B cell (primary cell): ENCODE measurements at regions of chr9 and their contacts with region 1.

Region 1: DNA sequence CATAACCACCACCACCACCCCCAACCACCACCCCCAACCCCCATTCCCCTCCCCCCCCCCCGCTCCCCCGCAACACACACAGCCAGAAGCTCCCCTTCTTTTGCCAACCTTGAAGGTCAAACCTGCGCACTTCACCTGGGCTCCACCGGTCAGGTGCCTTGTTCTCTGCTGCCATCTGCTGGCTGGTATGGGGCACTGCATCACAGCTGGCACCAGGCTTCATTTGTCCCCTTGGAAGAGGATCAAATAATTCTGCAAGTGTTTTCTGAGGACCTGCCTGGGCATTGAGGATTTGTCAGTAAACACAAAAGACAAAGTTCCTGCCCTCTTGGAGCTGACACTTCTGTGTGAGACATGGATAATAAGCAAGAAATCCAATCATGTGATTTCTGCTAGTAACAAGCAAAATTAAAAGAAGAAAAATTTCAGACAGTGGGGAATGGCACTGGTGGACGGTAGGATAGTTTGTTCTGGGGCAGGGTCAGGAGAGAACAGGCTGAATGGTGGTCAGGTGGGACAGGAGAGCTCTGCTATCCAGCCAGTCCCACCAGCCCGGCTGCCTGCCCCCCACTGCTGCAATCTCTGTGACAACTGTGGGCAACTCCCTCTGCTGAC is 55.6 kb upstream of the LMX1B start:
- DNase-seq: peak; percentile 78
- ATAC-seq: peak; percentile 97
- H3K4me3 ChIP-seq: no peak overlapping the region
- H3K4me3 Mint-ChIP-seq: no peak overlapping the region
- H3K27ac ChIP-seq: no peak overlapping the region
- H3K27ac Mint-ChIP-seq: no peak overlapping the region
- H3K4me1 ChIP-seq: no peaks in the 10 kb centered on the region
- H3K4me1 Mint-ChIP-seq: no peaks in the 10 kb centered on the region
- H3K27me3 ChIP-seq: peaks cover 0 to 23% (median 10%) of the 10 kb centered on the region in 4 experiments
- H3K27me3 Mint-ChIP-seq: peaks cover 26% of the 10 kb centered on the region
- CTCF ChIP-seq: peak; percentile 87

Region 2: DNA sequence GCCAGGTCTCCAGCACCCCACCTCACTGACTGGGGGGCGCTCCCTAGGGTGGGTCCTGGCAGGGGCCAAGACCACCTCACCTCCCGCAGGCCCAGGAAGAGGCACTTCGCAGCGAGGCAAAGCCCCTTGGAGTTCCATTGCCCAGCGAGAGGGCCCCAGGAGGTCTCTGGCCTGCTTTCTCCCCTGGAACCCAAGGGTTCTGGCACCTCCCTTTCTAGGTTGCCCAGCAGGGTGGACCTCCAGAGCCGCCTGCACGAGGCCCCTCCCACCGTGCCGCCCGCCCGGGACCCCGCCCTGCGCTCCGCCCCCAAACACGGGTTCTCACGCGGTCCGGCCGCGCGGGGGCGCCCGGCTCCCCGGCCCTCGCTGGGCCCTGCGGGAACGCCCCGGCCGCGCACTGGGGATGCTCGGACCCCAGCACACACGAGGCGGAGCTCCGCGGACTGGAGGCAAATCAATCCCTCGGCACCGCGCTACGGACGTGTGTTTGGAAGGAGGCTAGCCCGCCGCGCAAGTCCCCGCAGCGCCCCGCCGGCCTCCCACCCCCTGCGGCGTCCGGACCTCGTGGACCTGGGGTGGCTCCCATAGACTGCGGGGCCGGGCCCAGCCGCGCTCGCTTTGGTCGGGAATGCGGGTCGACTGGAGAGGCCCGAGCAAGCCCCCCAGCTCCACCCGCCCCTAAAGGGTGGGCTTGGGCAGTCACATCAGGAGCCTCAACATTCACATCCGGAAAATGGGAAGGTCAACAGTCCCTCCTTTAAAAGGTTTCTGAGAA is 43.9 kb before region 1 on chr9:
- CTCF ChIA-PET with region 1: interaction called, 167 read pairs
- POLR2A ChIA-PET with region 1: interaction called, 5 read pairs
- intact Hi-C with region 1: loop called (anchors 1 kb)
- DNase-seq: peak; percentile 78
- ATAC-seq: peak; percentile 97
- H3K4me3 ChIP-seq: peak overlapping the region in 3 of 5 experiments; percentile 17 to 38 (median 29)
- H3K4me3 Mint-ChIP-seq: peak overlapping the region; percentile 50
- H3K27ac ChIP-seq: no peak overlapping the region
- H3K27ac Mint-ChIP-seq: peak overlapping the region; percentile 32
- H3K4me1 ChIP-seq: peaks cover 24 to 27% of the 10 kb centered on the region in 2 donors
- H3K4me1 Mint-ChIP-seq: peaks cover 26% of the 10 kb centered on the region
- H3K27me3 ChIP-seq: peaks cover 2 to 53% (median 25%) of the 10 kb centered on the region in 4 experiments
- H3K27me3 Mint-ChIP-seq: peaks cover 44% of the 10 kb centered on the region
- CTCF ChIP-seq: peak; percentile 76

Region 3: GRCh38 chr9:126523611-126524111 is 34.5 kb before region 1 on chr9:
- CTCF ChIA-PET with region 1: interaction called, 167 read pairs
- POLR2A ChIA-PET with region 1: no interaction called
- intact Hi-C with region 1: no loop called
- DNase-seq: peak; percentile 41
- ATAC-seq: peak; percentile 61
- H3K4me3 ChIP-seq: peak overlapping the region in 3 of 5 experiments; percentile 21 to 61 (median 48)
- H3K4me3 Mint-ChIP-seq: peak overlapping the region; percentile 88
- H3K27ac ChIP-seq: no peak overlapping the region
- H3K27ac Mint-ChIP-seq: peak overlapping the region; percentile 77
- H3K4me1 ChIP-seq: peaks cover 11 to 16% of the 10 kb centered on the region in 2 donors
- H3K4me1 Mint-ChIP-seq: peaks cover 20% of the 10 kb centered on the region
- H3K27me3 ChIP-seq: peaks cover 0 to 22% (median 7%) of the 10 kb centered on the region in 4 experiments
- H3K27me3 Mint-ChIP-seq: peaks cover 22% of the 10 kb centered on the region
- CTCF ChIP-seq: no peak

Region 4: DNA sequence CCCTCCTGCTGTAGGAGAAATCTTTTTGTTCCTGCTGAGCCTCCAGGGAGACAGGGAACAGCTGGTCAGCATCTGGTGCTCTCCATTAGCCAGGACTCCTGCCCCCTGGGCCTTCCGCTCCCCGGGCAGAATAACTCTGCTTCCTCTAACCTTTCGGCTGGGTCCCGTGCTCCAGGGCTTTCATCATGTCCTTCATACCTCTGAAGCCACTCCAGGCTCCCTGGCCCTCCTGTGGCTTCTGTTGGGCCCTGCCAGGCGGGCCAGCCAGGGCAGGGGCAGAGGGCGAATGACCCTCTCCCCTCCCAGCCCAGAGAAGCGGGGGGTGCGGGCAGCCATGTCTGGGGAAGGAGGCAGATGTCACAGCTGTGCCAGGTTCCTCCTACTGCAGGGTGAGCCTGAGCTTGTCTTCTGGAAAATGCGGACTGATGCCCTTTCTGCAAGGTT is 26.1 kb before region 1 on chr9:
- CTCF ChIA-PET with region 1: interaction called, 28 read pairs
- POLR2A ChIA-PET with region 1: interaction called, 3 read pairs
- intact Hi-C with region 1: no loop called
- DNase-seq: no peak
- ATAC-seq: no peak
- H3K4me3 ChIP-seq: no peak overlapping the region
- H3K4me3 Mint-ChIP-seq: peak overlapping the region; percentile 79
- H3K27ac ChIP-seq: peak overlapping the region in 1 of 2 donors; percentile 18
- H3K27ac Mint-ChIP-seq: peak overlapping the region; percentile 91
- H3K4me1 ChIP-seq: peaks cover 43 to 58% of the 10 kb centered on the region in 2 donors
- H3K4me1 Mint-ChIP-seq: peaks cover 48% of the 10 kb centered on the region
- H3K27me3 ChIP-seq: no peaks in the 10 kb centered on the region
- H3K27me3 Mint-ChIP-seq: no peaks in the 10 kb centered on the region
- CTCF ChIP-seq: no peak

Region 5: DNA sequence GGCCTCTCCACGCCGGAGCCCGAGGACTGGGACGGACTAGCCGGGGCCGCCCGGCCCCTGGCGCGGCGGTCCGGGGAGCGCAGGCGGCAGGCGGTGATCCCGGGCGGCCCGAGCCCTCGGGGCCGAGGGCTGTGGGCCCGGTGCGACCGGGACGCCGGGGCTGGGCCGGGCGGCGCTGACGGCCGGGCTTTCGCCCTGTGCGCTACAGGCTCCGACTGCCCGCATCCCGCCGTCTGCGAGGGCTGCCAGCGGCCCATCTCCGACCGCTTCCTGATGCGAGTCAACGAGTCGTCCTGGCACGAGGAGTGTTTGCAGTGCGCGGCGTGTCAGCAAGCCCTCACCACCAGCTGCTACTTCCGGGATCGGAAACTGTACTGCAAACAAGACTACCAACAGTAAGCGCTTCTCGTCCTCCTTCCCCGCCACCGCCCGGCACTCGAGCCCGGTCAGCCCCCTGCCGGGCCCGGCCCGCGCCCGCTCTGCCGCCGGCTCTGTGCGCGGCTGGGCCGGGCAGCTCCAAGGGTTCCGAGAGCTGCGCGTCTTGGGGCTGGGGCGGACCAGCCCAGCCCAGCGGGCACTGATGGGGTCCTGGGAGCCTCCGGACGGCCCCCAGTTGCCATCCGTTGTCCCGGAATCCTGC is 57.1 kb after region 1 on chr9:
- CTCF ChIA-PET with region 1: no interaction called
- POLR2A ChIA-PET with region 1: no interaction called
- intact Hi-C with region 1: no loop called
- DNase-seq: peak; percentile 67
- ATAC-seq: peak; percentile 37
- H3K4me3 ChIP-seq: peak overlapping the region in 1 of 5 experiments; percentile 16
- H3K4me3 Mint-ChIP-seq: peak overlapping the region; percentile 67
- H3K27ac ChIP-seq: no peak overlapping the region
- H3K27ac Mint-ChIP-seq: no peak overlapping the region
- H3K4me1 ChIP-seq: peaks cover 43 to 58% of the 10 kb centered on the region in 2 donors
- H3K4me1 Mint-ChIP-seq: peaks cover 35% of the 10 kb centered on the region
- H3K27me3 ChIP-seq: peaks cover 0 to 83% (median 52%) of the 10 kb centered on the region in 4 experiments
- H3K27me3 Mint-ChIP-seq: peaks cover 59% of the 10 kb centered on the region
- CTCF ChIP-seq: no peak

Region 6: GRCh38 chr9:126671381-126671905 is 113.3 kb after region 1 on chr9:
- CTCF ChIA-PET with region 1: no interaction called
- POLR2A ChIA-PET with region 1: no interaction called
- intact Hi-C with region 1: no loop called
- DNase-seq: no peak
- ATAC-seq: no peak
- H3K4me3 ChIP-seq: no peak overlapping the region
- H3K4me3 Mint-ChIP-seq: no peak overlapping the region
- H3K27ac ChIP-seq: no peak overlapping the region
- H3K27ac Mint-ChIP-seq: no peak overlapping the region
- H3K4me1 ChIP-seq: peaks cover 7 to 19% of the 10 kb centered on the region in 2 donors
- H3K4me1 Mint-ChIP-seq: peaks cover 11% of the 10 kb centered on the region
- H3K27me3 ChIP-seq: peaks cover 0 to 70% (median 28%) of the 10 kb centered on the region in 4 experiments
- H3K27me3 Mint-ChIP-seq: peaks cover 35% of the 10 kb centered on the region
- CTCF ChIP-seq: no peak